Activated CD4-positive, alpha-beta memory T cell treated with anti-CD3 and anti-CD28 coated beads, Interleukin-2, amount 10 ng/mL, durations not matched to agents 7 days and 5 days (primary cell): ENCODE measurements at regions of chr10 and their contacts with region 1.

Region 1: GRCh38 chr10:97701438-97702069 is 12.0 kb upstream of the MARVELD1 start:
- DNase-seq: peak; percentile 49
- H3K4me3 Mint-ChIP-seq: no peak overlapping the region
- H3K27ac Mint-ChIP-seq: no peak overlapping the region
- H3K4me1 Mint-ChIP-seq: peaks cover 1% of the 10 kb centered on the region
- H3K27me3 Mint-ChIP-seq: peaks cover 13% of the 10 kb centered on the region

Region 2: DNA sequence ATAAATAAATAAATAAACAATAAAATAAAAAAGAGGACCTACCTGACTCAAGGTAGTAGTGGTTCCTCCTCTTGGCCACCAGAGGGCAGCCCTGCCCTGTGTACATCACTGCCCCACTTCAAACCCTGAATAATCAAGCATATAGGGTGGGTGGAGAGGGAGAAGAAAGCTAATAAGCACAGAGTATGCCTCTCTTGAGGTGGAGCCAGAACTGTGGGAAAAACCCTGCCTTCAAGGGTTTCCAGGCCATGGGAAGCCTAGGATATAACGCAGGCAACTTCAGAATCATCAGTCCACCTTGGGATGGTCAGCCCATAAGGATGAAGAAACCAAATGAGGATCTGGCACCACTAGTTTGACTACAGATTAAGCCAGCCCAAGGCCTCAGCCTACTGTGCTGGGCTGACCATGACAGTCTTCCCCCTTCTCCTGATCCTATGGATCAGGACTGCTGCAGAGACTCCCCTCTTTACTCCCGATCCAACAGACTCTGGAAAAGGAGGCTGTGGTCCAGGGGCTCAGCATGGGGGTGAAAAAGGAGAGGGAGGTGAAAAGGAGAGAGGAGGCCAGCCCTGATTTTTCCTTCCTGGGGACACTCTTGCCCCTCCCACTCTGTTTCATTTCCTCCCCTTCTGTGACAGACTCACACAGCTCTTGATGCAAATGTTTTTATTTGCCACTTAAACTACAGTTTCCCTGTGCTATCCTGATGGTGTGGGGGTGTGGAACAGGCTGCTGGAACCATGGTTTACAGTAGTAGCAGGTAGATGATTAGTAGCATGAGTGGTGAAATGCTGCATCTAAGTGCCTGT is 24.6 kb before region 1 on chr10:
- CTCF ChIA-PET with region 1: interaction called, 31 read pairs
- POLR2A ChIA-PET with region 1: no interaction called
- DNase-seq: peak; percentile 52
- H3K4me3 Mint-ChIP-seq: no peak overlapping the region
- H3K27ac Mint-ChIP-seq: no peak overlapping the region
- H3K4me1 Mint-ChIP-seq: peaks cover 17% of the 10 kb centered on the region
- H3K27me3 Mint-ChIP-seq: no peaks in the 10 kb centered on the region

Region 3: DNA sequence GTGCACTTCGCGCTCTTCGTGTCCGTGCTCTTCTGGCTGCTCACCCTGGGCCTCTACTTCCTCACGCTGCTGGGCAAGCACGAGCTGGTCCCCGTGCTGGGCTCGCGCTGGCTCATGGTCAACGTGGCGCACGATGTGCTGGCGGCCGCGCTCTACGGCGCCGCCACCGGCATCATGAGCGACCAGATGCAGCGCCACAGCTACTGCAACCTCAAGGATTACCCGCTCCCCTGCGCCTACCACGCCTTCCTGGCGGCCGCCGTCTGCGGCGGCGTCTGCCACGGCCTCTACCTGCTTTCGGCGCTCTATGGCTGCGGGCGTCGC is 12.5 kb after region 1 on chr10:
- CTCF ChIA-PET with region 1: interaction called, 33 read pairs
- POLR2A ChIA-PET with region 1: interaction called, 4 read pairs
- DNase-seq: peak; percentile 65
- H3K4me3 Mint-ChIP-seq: peak overlapping the region; percentile 97
- H3K27ac Mint-ChIP-seq: peak overlapping the region; percentile 60
- H3K4me1 Mint-ChIP-seq: peaks cover 18% of the 10 kb centered on the region
- H3K27me3 Mint-ChIP-seq: peaks cover 26% of the 10 kb centered on the region

Region 4: DNA sequence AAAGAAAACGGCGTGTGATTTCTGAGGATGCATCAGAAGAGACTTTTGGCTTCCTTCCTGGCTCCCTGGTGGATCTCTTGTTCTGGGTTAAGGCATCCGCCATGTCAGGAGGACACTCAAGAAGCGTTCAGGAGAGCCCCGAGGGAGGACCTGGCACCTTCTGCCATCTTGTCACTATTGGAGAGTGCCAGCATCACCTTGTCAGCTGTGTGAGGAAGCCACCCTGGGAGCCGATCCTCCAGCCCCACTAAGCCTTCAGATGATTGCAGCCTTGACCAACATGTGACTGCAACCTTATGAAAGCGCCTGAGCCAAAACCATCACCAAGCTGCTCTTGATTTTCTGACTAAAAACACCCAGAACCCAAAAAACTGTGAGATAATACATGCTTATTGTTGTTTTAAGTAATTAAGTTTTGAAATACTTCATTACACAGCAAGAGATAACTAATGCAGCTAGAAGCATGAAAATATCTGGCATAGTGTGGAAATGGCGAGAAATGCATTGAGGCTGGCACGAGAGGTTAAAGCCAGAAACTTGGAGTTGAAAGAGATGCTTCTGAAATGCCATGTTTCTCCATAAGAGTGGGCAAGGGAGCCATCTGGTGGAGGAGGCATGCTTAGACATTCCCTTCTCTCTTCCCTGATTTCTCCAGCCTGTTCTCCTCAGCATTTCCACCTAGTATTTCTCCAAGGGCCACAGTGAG is 29.9 kb after region 1 on chr10:
- CTCF ChIA-PET with region 1: interaction called, 111 read pairs
- POLR2A ChIA-PET with region 1: interaction called, 3 read pairs
- DNase-seq: peak; percentile 53
- H3K4me3 Mint-ChIP-seq: no peak overlapping the region
- H3K27ac Mint-ChIP-seq: no peak overlapping the region
- H3K4me1 Mint-ChIP-seq: peaks cover 16% of the 10 kb centered on the region
- H3K27me3 Mint-ChIP-seq: no peaks in the 10 kb centered on the region

Region 5: GRCh38 chr10:97843281-97843671 is 141.7 kb after region 1 on chr10:
- CTCF ChIA-PET with region 1: no interaction called
- POLR2A ChIA-PET with region 1: no interaction called
- DNase-seq: no peak
- H3K4me3 Mint-ChIP-seq: no peak overlapping the region
- H3K27ac Mint-ChIP-seq: no peak overlapping the region
- H3K4me1 Mint-ChIP-seq: peaks cover 16% of the 10 kb centered on the region
- H3K27me3 Mint-ChIP-seq: peaks cover 4% of the 10 kb centered on the region

Region 6: GRCh38 chr10:97869091-97870042 is 167.8 kb after region 1 on chr10:
- CTCF ChIA-PET with region 1: interaction called, 10 read pairs
- POLR2A ChIA-PET with region 1: no interaction called
- DNase-seq: peak; percentile 93
- H3K4me3 Mint-ChIP-seq: no peak overlapping the region
- H3K27ac Mint-ChIP-seq: peak overlapping the region; percentile 17
- H3K4me1 Mint-ChIP-seq: peaks cover 13% of the 10 kb centered on the region
- H3K27me3 Mint-ChIP-seq: peaks cover 19% of the 10 kb centered on the region